Activated CD4-positive, alpha-beta T cell treated with anti-CD3 and anti-CD28 coated beads for 36 hours (primary cell): ENCODE measurements at regions of chr20 and their contacts with region 1.

Region 1: GRCh38 chr20:64062596-64063388 is at the start of gene TCEA2:
- DNase-seq: peak; percentile 98
- ATAC-seq: peak; percentile 83
- H3K4me3 Mint-ChIP-seq: peak within 1 kb of the TSS; percentile 82
- H3K27ac Mint-ChIP-seq: peak within 1 kb of the TSS; percentile 79
- H3K4me1 Mint-ChIP-seq: peaks cover 51% of the 10 kb centered on the region
- H3K27me3 Mint-ChIP-seq: no peaks in the 10 kb centered on the region
- total RNA-seq, gene TCEA2: 40.6 to 50.0 TPM

Region 2: GRCh38 chr20:63495741-63496595 is 566.8 kb before region 1 on chr20:
- CTCF ChIA-PET with region 1: no interaction called
- POLR2A ChIA-PET with region 1: no interaction called
- intact Hi-C with region 1: no loop called
- DNase-seq: peak; percentile 88
- ATAC-seq: peak; percentile 80
- H3K4me3 Mint-ChIP-seq: peak overlapping the region; percentile 43
- H3K27ac Mint-ChIP-seq: no peak overlapping the region
- H3K4me1 Mint-ChIP-seq: peaks cover 2% of the 10 kb centered on the region
- H3K27me3 Mint-ChIP-seq: peaks cover 14% of the 10 kb centered on the region

Region 3: DNA sequence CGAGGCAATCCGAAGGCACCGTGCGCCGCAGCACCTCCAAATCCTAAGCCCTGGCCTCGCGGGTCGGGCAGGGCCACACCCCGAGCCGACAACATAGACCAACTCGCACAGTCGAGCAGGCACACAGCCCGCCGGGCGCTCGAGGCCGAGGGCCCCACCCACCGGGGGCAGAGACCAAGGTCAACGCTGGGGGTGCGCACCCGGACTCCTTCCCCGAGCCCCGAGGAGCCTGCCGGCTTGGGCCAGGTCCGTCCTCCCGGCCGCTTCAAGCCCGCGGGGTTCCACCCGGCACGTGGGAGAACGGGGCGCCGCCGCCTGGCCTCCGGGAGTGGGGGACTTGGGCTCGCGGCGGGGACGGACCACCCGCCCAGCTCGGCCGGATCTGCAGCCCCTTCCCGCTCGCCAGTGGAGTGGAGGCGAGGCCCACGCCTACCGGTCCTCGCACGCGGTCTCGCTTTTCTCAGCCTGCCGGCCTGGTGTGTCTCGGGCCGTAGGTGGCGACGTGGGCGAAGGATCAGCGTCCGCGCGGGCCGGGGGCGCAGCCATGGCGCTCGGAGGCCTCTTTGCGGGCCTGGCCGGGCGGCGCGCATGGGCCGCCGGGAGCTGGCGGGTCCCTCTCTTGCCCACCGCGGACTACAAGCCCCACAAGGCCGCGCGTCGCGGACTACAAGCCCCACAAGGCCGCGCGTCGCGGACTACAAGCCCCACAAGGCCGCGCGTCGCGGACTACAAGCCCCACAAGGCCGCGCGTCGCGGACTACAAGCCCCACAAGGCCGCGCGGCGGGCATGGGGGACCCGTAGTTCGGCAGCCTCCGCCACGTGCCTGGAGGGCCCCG is 106.7 kb before region 1 on chr20 and contains the start of gene UCKL1:
- CTCF ChIA-PET with region 1: no interaction called
- POLR2A ChIA-PET with region 1: interaction called, 4 read pairs
- intact Hi-C with region 1: loop called in 1 of 2 experiments (anchors 1 kb)
- DNase-seq: peak; percentile 95
- ATAC-seq: peak; percentile 78
- H3K4me3 Mint-ChIP-seq: peak within 1 kb of the TSS; percentile 77
- H3K27ac Mint-ChIP-seq: peak within 1 kb of the TSS; percentile 89
- H3K4me1 Mint-ChIP-seq: peaks cover 37% of the 10 kb centered on the region
- H3K27me3 Mint-ChIP-seq: no peaks in the 10 kb centered on the region
- total RNA-seq, gene UCKL1: 28.3 to 32.2 TPM

Region 4: GRCh38 chr20:64024141-64024990 is 38.4 kb before region 1 on chr20:
- CTCF ChIA-PET with region 1: no interaction called
- POLR2A ChIA-PET with region 1: no interaction called
- intact Hi-C with region 1: no loop called
- DNase-seq: no peak
- ATAC-seq: no peak
- H3K4me3 Mint-ChIP-seq: no peak overlapping the region
- H3K27ac Mint-ChIP-seq: no peak overlapping the region
- H3K4me1 Mint-ChIP-seq: no peaks in the 10 kb centered on the region
- H3K27me3 Mint-ChIP-seq: no peaks in the 10 kb centered on the region

Region 5: GRCh38 chr20:64079273-64080012 is 16.7 kb after region 1 on chr20 and contains the start of gene RGS19:
- CTCF ChIA-PET with region 1: interaction called, 4 read pairs
- POLR2A ChIA-PET with region 1: interaction called, 3 read pairs
- intact Hi-C with region 1: loop called (anchors 1 to 2 kb)
- DNase-seq: peak; percentile 77
- ATAC-seq: peak; percentile 43
- H3K4me3 Mint-ChIP-seq: peak within 1 kb of the TSS; percentile 90
- H3K27ac Mint-ChIP-seq: peak within 1 kb of the TSS; percentile 88
- H3K4me1 Mint-ChIP-seq: peaks cover 28% of the 10 kb centered on the region
- H3K27me3 Mint-ChIP-seq: peaks cover 3% of the 10 kb centered on the region
- total RNA-seq, gene RGS19: 39.6 to 40.2 TPM

Region 6: DNA sequence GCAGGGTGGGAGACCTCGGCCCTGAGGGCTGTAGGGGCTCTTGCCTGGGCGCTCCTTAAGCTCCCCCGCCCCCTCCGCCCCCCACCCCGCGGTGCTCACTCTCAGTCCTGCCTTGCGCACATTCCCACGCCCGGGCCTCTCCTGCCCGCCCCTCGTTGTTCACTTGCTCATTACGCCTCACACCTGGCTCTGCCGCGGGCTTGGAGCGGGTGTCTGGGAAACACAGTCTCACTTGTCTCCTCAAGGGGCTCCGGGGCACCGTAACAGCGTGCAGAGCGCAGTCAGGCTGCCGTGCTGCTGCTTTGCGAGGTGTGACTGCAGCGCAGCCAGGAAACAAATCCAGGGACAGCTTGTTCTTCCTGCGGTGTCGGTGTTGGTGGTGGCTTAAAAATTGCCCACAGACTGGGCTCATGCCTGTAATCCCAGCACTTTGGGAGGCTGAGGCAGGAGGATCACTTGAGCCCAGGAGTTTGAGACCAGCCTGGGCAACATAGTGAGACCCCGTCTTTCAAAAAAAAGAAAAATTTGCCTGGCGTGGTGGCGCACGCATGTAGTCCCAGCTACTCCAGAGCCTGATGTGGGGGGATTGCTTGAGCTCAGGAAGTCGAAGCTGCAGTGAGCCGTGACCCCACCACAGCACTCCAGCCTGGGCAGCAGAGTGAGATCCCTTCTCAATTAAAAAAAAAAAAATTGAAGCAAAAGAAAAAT is 40.0 kb after region 1 on chr20:
- CTCF ChIA-PET with region 1: no interaction called
- POLR2A ChIA-PET with region 1: no interaction called
- intact Hi-C with region 1: no loop called
- DNase-seq: peak; percentile 29
- ATAC-seq: no peak
- H3K4me3 Mint-ChIP-seq: peak overlapping the region; percentile 58
- H3K27ac Mint-ChIP-seq: no peak overlapping the region
- H3K4me1 Mint-ChIP-seq: peaks cover 25% of the 10 kb centered on the region
- H3K27me3 Mint-ChIP-seq: peaks cover 13% of the 10 kb centered on the region